Panc1 (cell line): ENCODE measurements at regions of chr4 and their contacts with region 1.

Region 1: DNA sequence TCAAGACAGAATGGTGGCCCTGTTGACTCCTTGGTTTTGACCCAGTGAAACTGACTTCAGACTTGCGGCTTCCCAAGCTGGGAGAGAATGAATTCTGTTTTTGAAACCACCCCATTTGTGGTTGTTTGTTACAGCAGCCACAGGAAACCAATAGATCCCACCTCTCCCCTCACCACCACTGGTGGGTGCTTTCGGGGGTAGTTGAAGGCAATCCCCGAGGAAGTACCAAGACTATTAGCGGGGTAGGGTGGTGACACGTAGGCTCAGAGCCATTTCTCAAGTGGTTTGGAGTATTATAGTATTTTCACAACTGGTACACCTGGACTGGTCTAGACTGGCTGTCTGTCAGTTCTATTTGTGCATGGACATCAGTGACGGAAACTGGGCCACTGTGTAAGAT is 189.1 kb upstream of the RBPJ start:
- DNase-seq: no peak
- ATAC-seq: no peak
- H3K4me3 ChIP-seq: no peak overlapping the region
- H3K27ac ChIP-seq: no peak overlapping the region
- H3K4me1 ChIP-seq: no peaks in the 10 kb centered on the region
- H3K27me3 ChIP-seq: no peaks in the 10 kb centered on the region
- CTCF ChIP-seq: no peak

Region 2: GRCh38 chr4:25527034-25527433 is 604.7 kb before region 1 on chr4:
- CTCF ChIA-PET with region 1: no interaction called
- POLR2A ChIA-PET with region 1: interaction called, 13 read pairs
- in situ Hi-C with region 1: no loop called
- intact Hi-C with region 1: no loop called
- DNase-seq: no peak
- ATAC-seq: no peak
- H3K4me3 ChIP-seq: no peak overlapping the region
- H3K27ac ChIP-seq: no peak overlapping the region
- H3K4me1 ChIP-seq: no peaks in the 10 kb centered on the region
- H3K27me3 ChIP-seq: no peaks in the 10 kb centered on the region
- CTCF ChIP-seq: no peak